ENCODE measurements at regions of chr3 and their contacts with region 1.

Region 1: GRCh38 chr3:64484289-64484992 is 203.4 kb downstream of the ADAMTS9 start:
- DNase-seq: peak; percentile 9 to 65 (median 54)
- ATAC-seq: peak; percentile 73
- H3K4me3 ChIP-seq: no peak overlapping the region
- H3K4me3 Mint-ChIP-seq: no peak overlapping the region
- H3K27ac ChIP-seq: no peak overlapping the region
- H3K27ac Mint-ChIP-seq: no peak overlapping the region
- H3K4me1 ChIP-seq: no peaks in the 10 kb centered on the region
- H3K4me1 Mint-ChIP-seq: peaks cover 2% of the 10 kb centered on the region
- H3K27me3 ChIP-seq: no peaks in the 10 kb centered on the region
- H3K27me3 Mint-ChIP-seq: peaks cover 13% of the 10 kb centered on the region
- CTCF ChIP-seq: peak; percentile 44

Region 2: DNA sequence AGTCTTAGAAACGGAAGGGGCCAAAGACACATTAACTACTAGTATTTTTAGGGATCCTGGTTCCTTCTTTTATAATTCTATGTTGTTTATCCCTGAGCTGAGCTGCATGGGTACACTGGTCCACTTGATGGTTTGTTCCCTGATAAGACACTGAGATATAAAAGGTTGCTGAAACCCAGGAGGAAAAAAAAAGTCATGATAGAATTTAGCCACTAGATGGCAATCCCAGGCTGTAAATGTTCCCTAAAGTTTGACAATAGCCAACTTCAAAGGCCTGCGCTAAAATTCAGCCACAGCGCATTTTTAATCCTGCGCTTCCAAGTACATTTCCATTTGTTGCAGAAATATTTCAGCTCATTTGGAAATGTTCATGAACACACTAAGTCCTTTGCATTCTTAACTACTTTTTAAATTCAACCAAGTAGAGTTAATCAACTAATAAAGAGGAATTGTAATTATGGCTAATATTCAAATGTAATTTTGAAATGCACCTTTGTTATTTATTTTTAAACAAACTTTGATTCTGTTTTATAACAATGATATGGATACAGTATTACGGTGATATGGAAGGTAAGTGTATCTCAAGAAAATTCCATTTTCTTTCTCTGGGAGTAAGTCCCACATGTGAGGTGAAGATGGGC is 1861.8 kb before region 1 on chr3:
- CTCF ChIA-PET with region 1: no interaction called
- POLR2A ChIA-PET with region 1: no interaction called
- intact Hi-C with region 1: loop called in 1 of 2 experiments (anchors 10 kb)
- DNase-seq: peak in 2 of 9 experiments; percentile 1 to 8
- ATAC-seq: no peak
- H3K4me3 ChIP-seq: no peak overlapping the region
- H3K4me3 Mint-ChIP-seq: no peak overlapping the region
- H3K27ac ChIP-seq: no peak overlapping the region
- H3K27ac Mint-ChIP-seq: no peak overlapping the region
- H3K4me1 ChIP-seq: no peaks in the 10 kb centered on the region
- H3K4me1 Mint-ChIP-seq: no peaks in the 10 kb centered on the region
- H3K27me3 ChIP-seq: no peaks in the 10 kb centered on the region
- H3K27me3 Mint-ChIP-seq: no peaks in the 10 kb centered on the region
- CTCF ChIP-seq: peak; percentile 16

Region 3: GRCh38 chr3:63349583-63350521 is 1134.6 kb before region 1 on chr3:
- CTCF ChIA-PET with region 1: no interaction called
- POLR2A ChIA-PET with region 1: no interaction called
- intact Hi-C with region 1: loop called (anchors 5 to 10 kb)
- DNase-seq: peak in 3 of 9 experiments; percentile 11 to 36 (median 26)
- ATAC-seq: no peak
- H3K4me3 ChIP-seq: no peak overlapping the region
- H3K4me3 Mint-ChIP-seq: no peak overlapping the region
- H3K27ac ChIP-seq: no peak overlapping the region
- H3K27ac Mint-ChIP-seq: no peak overlapping the region
- H3K4me1 ChIP-seq: no peaks in the 10 kb centered on the region
- H3K4me1 Mint-ChIP-seq: no peaks in the 10 kb centered on the region
- H3K27me3 ChIP-seq: no peaks in the 10 kb centered on the region
- H3K27me3 Mint-ChIP-seq: peaks cover 17% of the 10 kb centered on the region
- CTCF ChIP-seq: peak; percentile 43

Measured in CD8-positive, alpha-beta T cell (primary cell).